ENCODE measurements at regions of chr2 and their contacts with region 1.

Region 1: DNA sequence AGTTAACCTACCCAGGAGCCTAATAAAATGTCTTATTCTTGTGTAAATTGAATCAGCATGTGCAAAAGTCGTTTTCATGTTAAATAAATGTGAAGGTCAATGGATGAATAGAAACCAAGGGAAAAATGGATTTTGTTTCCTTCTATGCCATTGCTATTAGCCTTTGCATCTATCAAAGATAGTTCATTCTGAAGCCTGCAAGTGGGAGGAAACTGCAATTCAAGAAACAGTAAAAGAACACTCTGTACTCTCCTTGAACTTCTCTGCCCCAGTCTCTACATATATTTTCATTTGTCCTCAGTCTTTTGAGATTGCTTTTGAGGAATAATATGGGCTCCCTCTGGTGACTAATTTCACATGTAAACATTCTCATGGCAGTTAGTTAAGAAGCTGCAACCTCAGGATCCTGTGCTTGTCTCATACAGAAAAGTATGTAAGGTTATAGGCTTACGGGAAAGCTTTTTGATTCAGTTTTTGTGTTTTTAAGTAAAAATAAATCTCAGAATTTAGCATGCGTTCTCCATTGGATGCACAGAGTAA is 1590.0 kb upstream of the LRRTM1 start:
- DNase-seq: no peak
- H3K4me3 ChIP-seq: no peak overlapping the region
- H3K27ac ChIP-seq: no peak overlapping the region
- H3K4me1 ChIP-seq: no peaks in the 10 kb centered on the region
- H3K27me3 ChIP-seq: no peaks in the 10 kb centered on the region
- CTCF ChIP-seq: no peak

Region 2: GRCh38 chr2:81324046-81324445 is 570.5 kb before region 1 on chr2:
- CTCF ChIA-PET with region 1: no interaction called
- POLR2A ChIA-PET with region 1: no interaction called
- intact Hi-C with region 1: loop called (anchors 10 kb)
- DNase-seq: no peak
- H3K4me3 ChIP-seq: no peak overlapping the region
- H3K27ac ChIP-seq: no peak overlapping the region
- H3K4me1 ChIP-seq: no peaks in the 10 kb centered on the region
- H3K27me3 ChIP-seq: no peaks in the 10 kb centered on the region
- CTCF ChIP-seq: peak; percentile 57; the same call in 1 of the 2 replicates

Region 3: GRCh38 chr2:82256983-82257632 is 362.6 kb after region 1 on chr2:
- CTCF ChIA-PET with region 1: no interaction called
- POLR2A ChIA-PET with region 1: no interaction called
- intact Hi-C with region 1: no loop called
- DNase-seq: no peak
- H3K4me3 ChIP-seq: no peak overlapping the region
- H3K27ac ChIP-seq: no peak overlapping the region
- H3K4me1 ChIP-seq: no peaks in the 10 kb centered on the region
- H3K27me3 ChIP-seq: no peaks in the 10 kb centered on the region
- CTCF ChIP-seq: no peak

Region 4: DNA sequence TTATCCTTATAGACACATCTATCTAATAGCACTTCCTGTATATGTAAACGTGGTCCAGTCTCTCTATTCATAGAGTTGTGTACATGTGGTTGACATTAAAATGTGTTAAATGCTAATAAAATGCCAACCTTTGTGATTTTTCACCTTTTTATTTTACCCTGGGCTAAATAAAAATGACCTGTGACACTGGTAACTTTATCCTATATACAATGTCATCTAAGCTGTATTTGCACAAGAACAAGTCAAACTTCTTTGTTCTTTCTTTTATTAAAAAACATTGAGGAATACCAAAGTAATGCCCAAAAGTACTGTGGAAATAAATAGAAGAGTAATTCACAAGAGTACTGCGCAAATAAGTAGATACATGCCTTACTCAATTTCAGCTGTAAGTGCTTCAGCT is 594.0 kb after region 1 on chr2:
- CTCF ChIA-PET with region 1: no interaction called
- POLR2A ChIA-PET with region 1: no interaction called
- intact Hi-C with region 1: no loop called
- DNase-seq: no peak
- H3K4me3 ChIP-seq: no peak overlapping the region
- H3K27ac ChIP-seq: no peak overlapping the region
- H3K4me1 ChIP-seq: no peaks in the 10 kb centered on the region
- H3K27me3 ChIP-seq: no peaks in the 10 kb centered on the region
- CTCF ChIP-seq: no peak

Measured in PC-9 (cell line).